ENCODE measurements at regions of chr1 and their contacts with region 1.

Region 1: GRCh38 chr1:24586970-24587820 is 31.3 kb downstream of the NCMAP start:
- H3K4me3 ChIP-seq: no peak overlapping the region
- H3K27ac ChIP-seq: no peak overlapping the region
- H3K4me1 ChIP-seq: no peaks in the 10 kb centered on the region
- CTCF ChIP-seq: peak; percentile 73

Region 2: GRCh38 chr1:24329797-24330543 is 257.2 kb before region 1 on chr1:
- CTCF ChIA-PET with region 1: no interaction called
- POLR2A ChIA-PET with region 1: no interaction called
- H3K4me3 ChIP-seq: no peak overlapping the region
- H3K27ac ChIP-seq: no peak overlapping the region
- H3K4me1 ChIP-seq: no peaks in the 10 kb centered on the region; the same call in 1 of the 2 replicates
- CTCF ChIP-seq: no peak

Region 3: GRCh38 chr1:24421502-24421901 is 165.7 kb before region 1 on chr1:
- CTCF ChIA-PET with region 1: interaction called, 23 read pairs
- POLR2A ChIA-PET with region 1: no interaction called
- H3K4me3 ChIP-seq: no peak overlapping the region
- H3K27ac ChIP-seq: no peak overlapping the region
- H3K4me1 ChIP-seq: peaks cover 5% of the 10 kb centered on the region
- CTCF ChIP-seq: no peak

Region 4: DNA sequence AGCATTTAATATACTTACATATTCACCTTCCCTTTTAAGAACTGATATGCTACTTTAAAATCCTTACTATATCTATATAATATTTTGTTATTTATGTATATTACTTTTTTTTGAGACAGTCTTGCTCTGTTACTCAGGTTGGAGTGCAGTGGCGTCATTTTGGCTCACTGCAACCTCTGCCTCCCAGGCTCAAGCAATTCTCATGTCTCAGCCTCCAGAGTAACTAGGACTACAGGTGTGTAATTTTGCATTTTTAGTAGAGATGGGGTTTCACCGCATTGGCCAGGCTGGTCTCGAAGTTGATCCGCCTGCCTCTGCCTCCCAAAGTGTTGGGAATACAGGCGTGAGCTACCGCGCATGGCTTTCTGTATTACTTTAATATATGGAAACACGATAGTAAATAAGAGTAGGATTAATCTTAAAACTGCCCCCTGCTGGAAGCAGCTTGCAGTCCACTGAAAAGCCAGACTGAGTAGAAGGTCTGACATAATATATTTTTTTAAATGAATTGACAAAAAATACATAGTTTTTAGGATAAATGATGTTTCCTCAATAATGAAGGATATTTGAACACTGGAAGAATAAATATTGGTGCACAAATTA is 60.2 kb before region 1 on chr1:
- CTCF ChIA-PET with region 1: interaction called, 10 read pairs
- POLR2A ChIA-PET with region 1: no interaction called
- H3K4me3 ChIP-seq: no peak overlapping the region
- H3K27ac ChIP-seq: no peak overlapping the region
- H3K4me1 ChIP-seq: no peaks in the 10 kb centered on the region
- CTCF ChIP-seq: no peak

Region 5: DNA sequence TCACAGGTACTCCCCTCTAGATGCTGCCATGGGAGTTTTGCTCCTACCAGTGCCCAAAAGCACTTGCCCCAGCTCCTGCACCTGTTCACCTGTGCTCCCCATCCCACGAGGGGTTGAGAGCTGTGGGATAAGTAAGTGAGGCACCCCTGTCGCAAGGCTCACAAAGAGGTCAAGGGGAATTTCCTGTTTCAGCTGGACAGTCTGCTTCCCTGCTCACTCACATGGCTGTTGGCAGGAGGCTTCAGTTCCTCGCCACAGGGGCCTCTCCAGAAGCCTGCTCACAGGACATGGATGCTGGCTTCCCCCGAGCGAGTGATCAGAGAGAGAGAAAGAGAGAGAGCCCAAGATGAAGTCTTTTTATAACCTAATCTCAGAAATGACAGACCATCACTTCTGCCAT is 40.0 kb before region 1 on chr1:
- CTCF ChIA-PET with region 1: interaction called, 69 read pairs
- POLR2A ChIA-PET with region 1: interaction called, 3 read pairs
- H3K4me3 ChIP-seq: no peak overlapping the region
- H3K27ac ChIP-seq: no peak overlapping the region
- H3K4me1 ChIP-seq: no peaks in the 10 kb centered on the region
- CTCF ChIP-seq: no peak

Region 6: DNA sequence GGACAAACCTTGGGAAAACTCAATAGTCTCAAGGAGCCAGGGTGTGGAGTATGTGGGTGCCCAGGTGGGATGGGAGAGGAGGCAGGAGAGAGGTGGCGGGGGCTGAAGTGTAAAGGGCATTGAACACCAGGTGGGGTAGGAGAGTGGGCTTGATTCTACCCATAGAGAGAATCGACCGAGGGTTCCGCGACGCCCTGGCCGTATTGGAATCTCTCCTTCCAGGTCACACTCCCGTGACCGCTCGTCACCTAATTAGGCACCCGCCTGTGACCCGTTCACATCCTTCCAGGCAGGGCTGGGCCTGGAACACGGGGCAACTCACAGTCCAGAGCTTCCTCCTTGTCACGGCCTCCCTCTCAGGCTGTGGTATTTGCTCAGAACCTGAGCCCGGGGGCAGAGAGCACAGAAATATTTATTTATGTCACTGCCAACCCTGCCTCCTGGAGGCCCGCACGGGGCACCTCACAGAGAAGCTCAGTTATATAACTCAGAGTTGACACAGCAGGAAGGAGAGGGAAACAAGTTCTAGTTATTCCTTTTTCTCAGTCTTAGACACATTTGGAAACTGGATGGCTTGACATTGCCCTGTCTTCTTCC is 19.3 kb before region 1 on chr1:
- CTCF ChIA-PET with region 1: interaction called, 55 read pairs
- POLR2A ChIA-PET with region 1: no interaction called
- H3K4me3 ChIP-seq: no peak overlapping the region
- H3K27ac ChIP-seq: no peak overlapping the region
- H3K4me1 ChIP-seq: peaks cover 2% of the 10 kb centered on the region; the same call in 1 of the 2 replicates
- CTCF ChIP-seq: no peak

Region 7: GRCh38 chr1:24635195-24635843 is 48.1 kb after region 1 on chr1:
- CTCF ChIA-PET with region 1: interaction called, 24 read pairs
- POLR2A ChIA-PET with region 1: no interaction called
- H3K4me3 ChIP-seq: no peak overlapping the region
- H3K27ac ChIP-seq: no peak overlapping the region
- H3K4me1 ChIP-seq: no peaks in the 10 kb centered on the region
- CTCF ChIP-seq: peak; percentile 50; the same call in 1 of the 2 replicates

Measured in HEK293 (cell line).